ENCODE measurements at regions of chr21 and their contacts with region 1.

Region 1: DNA sequence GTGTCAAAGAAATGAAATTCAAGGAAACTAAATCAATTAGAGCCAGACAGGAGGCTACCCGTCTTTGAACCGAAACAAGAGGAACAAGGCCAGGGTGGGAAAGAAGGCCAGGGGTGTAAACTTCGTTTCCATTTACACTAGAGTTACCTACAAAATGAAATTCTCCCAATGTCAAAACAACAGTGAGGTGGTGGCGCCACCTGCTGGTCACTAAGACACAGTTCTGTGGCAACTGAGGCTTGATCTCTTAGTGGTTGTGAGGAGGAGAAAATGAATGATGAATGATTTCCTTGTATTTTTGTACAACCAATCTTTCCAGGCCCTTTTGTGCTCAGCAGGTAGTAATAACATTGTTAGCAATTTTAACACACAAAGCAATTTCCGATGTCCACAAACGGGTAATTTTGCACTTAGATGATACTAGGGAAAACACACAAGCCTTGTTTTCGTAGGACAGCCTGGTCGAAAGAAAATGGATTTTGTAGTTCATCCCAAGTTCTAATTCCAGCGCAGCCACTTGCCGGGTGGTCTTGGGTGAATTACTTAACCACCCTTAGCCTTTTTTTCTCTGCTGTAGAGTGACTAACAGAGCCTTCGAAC is 54.8 kb upstream of the SOD1 start:
- DNase-seq: peak; percentile 35 to 47
- H3K4me3 ChIP-seq: no peak overlapping the region
- H3K27ac ChIP-seq: no peak overlapping the region
- H3K4me1 ChIP-seq: no peaks in the 10 kb centered on the region; the same call in 1 of the 2 replicates
- H3K27me3 ChIP-seq: no peaks in the 10 kb centered on the region
- CTCF ChIP-seq: peak; percentile 87

Region 2: GRCh38 chr21:31098576-31099005 is 506.1 kb before region 1 on chr21:
- CTCF ChIA-PET with region 1: no interaction called
- POLR2A ChIA-PET with region 1: no interaction called
- intact Hi-C with region 1: loop called (anchors 1 kb)
- DNase-seq: peak in 1 of 2 experiments; percentile 43
- H3K4me3 ChIP-seq: no peak overlapping the region
- H3K27ac ChIP-seq: no peak overlapping the region
- H3K4me1 ChIP-seq: no peaks in the 10 kb centered on the region
- H3K27me3 ChIP-seq: no peaks in the 10 kb centered on the region
- CTCF ChIP-seq: peak; percentile 74

Region 3: GRCh38 chr21:31198575-31198974 is 406.1 kb before region 1 on chr21:
- CTCF ChIA-PET with region 1: no interaction called
- POLR2A ChIA-PET with region 1: no interaction called
- intact Hi-C with region 1: loop called (anchors 1 kb)
- DNase-seq: peak in 1 of 2 experiments; percentile 48
- H3K4me3 ChIP-seq: no peak overlapping the region
- H3K27ac ChIP-seq: no peak overlapping the region
- H3K4me1 ChIP-seq: no peaks in the 10 kb centered on the region
- H3K27me3 ChIP-seq: no peaks in the 10 kb centered on the region
- CTCF ChIP-seq: peak; percentile 77

Region 4: GRCh38 chr21:31683030-31683429 is 78.3 kb after region 1 on chr21:
- CTCF ChIA-PET with region 1: no interaction called
- POLR2A ChIA-PET with region 1: no interaction called
- intact Hi-C with region 1: no loop called
- DNase-seq: no peak
- H3K4me3 ChIP-seq: no peak overlapping the region
- H3K27ac ChIP-seq: no peak overlapping the region
- H3K4me1 ChIP-seq: no peaks in the 10 kb centered on the region
- H3K27me3 ChIP-seq: no peaks in the 10 kb centered on the region
- CTCF ChIP-seq: no peak